ENCODE measurements at regions of chr1 and their contacts with region 1.

Region 1: GRCh38 chr1:43358746-43359693 is at the start of gene CDC20:
- DNase-seq: peak; percentile 96 to 99
- ATAC-seq: peak; percentile 98 to 100
- H3K4me3 ChIP-seq: peak within 1 kb of the TSS; percentile 60 to 81 (median 70)
- H3K27ac ChIP-seq: peak within 1 kb of the TSS; percentile 83 to 90 (median 88)
- H3K4me1 ChIP-seq: peaks cover 10 to 12% of the 10 kb centered on the region in 2 donors
- H3K27me3 ChIP-seq: no peaks in the 10 kb centered on the region
- CTCF ChIP-seq: no peak
- POLR2A ChIP-seq: no peak
- total RNA-seq, gene CDC20: 0.46 to 2.4 (median 0.76) TPM

Region 2: DNA sequence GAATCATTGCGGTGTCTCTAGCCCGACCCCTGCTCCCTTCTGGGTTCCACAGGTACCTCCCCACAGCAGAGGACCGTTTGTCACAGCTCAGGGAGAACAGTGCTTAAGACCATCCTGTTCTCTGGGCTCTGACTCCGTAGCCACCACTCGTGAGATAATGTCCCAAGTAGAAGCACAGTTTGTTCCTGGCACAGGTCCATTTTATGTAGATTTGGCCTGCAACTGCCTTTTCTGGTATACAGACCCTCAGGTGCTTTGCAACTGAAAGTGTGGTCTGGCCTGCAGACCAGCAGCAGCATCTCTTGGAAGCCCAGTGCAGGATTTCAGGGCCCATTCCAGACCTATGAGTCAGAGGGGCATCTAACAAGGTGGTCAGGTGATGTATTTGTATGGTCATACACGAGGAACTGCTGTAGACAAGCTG is 117.6 kb before region 1 on chr1:
- in situ Hi-C with region 1: no loop called
- intact Hi-C with region 1: no loop called
- DNase-seq: no peak
- ATAC-seq: no peak
- H3K4me3 ChIP-seq: no peak overlapping the region
- H3K27ac ChIP-seq: no peak overlapping the region
- H3K4me1 ChIP-seq: no peaks in the 10 kb centered on the region
- H3K27me3 ChIP-seq: no peaks in the 10 kb centered on the region
- CTCF ChIP-seq: no peak
- POLR2A ChIP-seq: no peak

Region 3: GRCh38 chr1:43300378-43301094 is 58.5 kb before region 1 on chr1 and contains the start of gene TIE1:
- in situ Hi-C with region 1: no loop called
- intact Hi-C with region 1: loop called (anchors 5 kb)
- DNase-seq: no peak
- ATAC-seq: peak; percentile 45 to 69
- H3K4me3 ChIP-seq: peak within 1 kb of the TSS; percentile 47 to 54 (median 48)
- H3K27ac ChIP-seq: peak within 1 kb of the TSS; percentile 70 to 81 (median 74)
- H3K4me1 ChIP-seq: peaks cover 0 to 8% of the 10 kb centered on the region in 2 donors
- H3K27me3 ChIP-seq: no peaks in the 10 kb centered on the region
- CTCF ChIP-seq: no peak
- POLR2A ChIP-seq: peak; percentile 33 to 64
- total RNA-seq, gene TIE1: 15.9 to 27.9 (median 20.7) TPM

Region 4: DNA sequence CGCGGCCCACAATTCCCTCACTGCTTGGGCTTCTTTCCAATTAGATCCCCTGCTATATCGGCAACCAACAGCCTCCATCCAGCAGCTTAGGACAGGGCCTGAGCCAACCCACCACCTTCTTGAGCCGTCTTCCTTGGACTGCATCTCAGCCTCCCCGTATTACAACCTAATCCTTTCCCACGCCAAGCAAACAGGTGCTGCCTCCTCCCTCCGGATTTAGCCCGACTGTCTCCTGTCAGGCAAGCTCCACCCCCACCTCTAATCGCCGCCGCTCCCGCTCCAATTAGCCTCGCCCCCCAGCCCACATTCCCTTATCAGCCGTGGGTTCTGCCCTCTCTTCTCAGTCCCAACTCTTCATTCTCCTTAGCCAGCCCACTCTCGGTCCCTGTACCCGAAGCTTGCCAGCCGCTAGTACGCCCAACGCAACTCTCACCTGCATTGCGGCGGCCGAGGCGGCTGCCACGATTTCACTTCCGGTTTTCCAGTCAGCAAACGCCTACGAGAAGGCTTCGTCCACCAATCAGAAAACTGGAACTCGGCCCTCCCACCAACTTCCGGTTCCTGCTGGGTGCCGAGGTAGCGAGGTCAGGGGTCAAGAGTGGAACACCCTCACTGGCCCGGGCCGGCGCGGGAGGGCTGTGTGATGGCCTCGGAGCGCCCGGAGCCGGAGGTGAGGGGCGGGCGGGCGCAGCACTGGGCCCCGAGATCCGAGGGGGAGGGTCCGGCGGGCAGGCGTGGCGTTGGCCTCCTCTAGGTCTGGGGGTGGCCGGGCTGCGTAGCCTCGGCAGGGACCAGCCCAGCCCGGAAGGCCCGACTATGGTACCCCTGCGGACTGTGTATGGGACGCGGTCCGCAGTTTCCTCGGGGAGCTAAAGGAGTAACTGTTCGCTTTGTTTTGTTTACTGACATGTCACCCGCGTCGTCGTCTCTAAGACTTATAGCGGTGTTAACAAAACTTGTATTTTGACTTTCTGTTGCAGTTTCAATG is 30.6 kb after region 1 on chr1 and contains the starts of genes MED8 and SZT2:
- in situ Hi-C with region 1: no loop called
- intact Hi-C with region 1: loop called (anchors 2 kb)
- DNase-seq: peak; percentile 92 to 97
- ATAC-seq: peak; percentile 99 to 100
- H3K4me3 ChIP-seq: peak within 1 kb of the TSS; percentile 81 to 96 (median 92)
- H3K27ac ChIP-seq: peak within 1 kb of the TSS; percentile 88 to 94 (median 90)
- H3K4me1 ChIP-seq: peaks cover 25 to 26% of the 10 kb centered on the region in 2 donors
- H3K27me3 ChIP-seq: no peaks in the 10 kb centered on the region
- CTCF ChIP-seq: no peak
- POLR2A ChIP-seq: peak; percentile 70 to 86
- total RNA-seq, gene MED8: 14.9 to 30.8 (median 23.8) TPM
- total RNA-seq, gene SZT2: 15.9 to 20.9 (median 17.9) TPM